ENCODE measurements at regions of chr6 and their contacts with region 1.

Region 1: GRCh38 chr6:32047850-32048766 is 9.9 kb downstream of the CYP21A2 start:
- H3K4me3 ChIP-seq: no peak overlapping the region
- H3K27ac ChIP-seq: no peak overlapping the region
- H3K4me1 ChIP-seq: no peaks in the 10 kb centered on the region
- CTCF ChIP-seq: peak; percentile 77

Region 2: DNA sequence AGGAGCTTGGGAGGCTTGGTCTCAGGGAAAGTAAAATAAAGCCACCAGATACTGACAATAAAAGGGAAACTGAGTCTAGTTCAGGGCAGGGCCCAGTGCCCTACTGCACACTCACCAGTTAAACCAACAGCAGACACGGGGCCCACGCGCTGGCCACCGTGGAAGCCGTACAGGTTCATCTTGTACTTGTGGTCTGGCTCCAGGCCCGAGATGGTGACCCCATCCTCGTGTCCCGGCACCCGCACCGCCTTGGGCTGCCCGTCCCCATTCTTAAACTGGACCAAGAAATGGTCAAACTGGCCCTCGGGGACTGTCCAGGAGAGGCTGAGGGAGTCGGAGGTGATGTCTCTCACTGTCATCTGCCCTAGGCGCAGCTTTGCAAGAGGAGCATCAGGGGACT is 16.6 kb after region 1 on chr6:
- CTCF ChIA-PET with region 1: interaction called, 20 read pairs
- POLR2A ChIA-PET with region 1: no interaction called
- H3K4me3 ChIP-seq: no peak overlapping the region
- H3K27ac ChIP-seq: no peak overlapping the region
- H3K4me1 ChIP-seq: no peaks in the 10 kb centered on the region
- CTCF ChIP-seq: no peak

Region 3: DNA sequence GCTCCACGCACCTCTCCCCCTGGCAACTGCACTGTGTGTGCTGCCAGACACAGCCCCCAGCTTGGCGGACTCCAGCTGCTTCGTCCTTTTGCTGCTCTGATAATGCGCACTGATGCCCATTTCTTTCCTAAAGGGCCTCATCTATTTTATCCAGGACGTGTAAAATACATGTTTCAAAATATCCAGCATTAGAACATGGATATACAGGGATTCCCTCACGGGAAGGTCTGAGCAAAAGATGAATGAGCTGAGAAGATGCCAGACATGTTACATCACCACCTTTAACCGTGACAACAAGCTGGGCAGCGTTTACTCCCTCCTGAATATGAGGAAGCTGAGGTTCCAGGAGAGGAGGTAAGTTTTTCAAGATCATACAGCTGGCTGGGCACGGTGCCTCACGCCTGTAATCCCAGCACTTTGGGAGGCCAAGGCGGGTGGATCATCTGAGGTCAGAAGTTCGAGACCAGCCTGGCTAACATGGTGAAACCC is 28.3 kb after region 1 on chr6:
- CTCF ChIA-PET with region 1: interaction called, 16 read pairs
- POLR2A ChIA-PET with region 1: no interaction called
- H3K4me3 ChIP-seq: no peak overlapping the region
- H3K27ac ChIP-seq: no peak overlapping the region
- H3K4me1 ChIP-seq: no peaks in the 10 kb centered on the region
- CTCF ChIP-seq: no peak

Region 4: DNA sequence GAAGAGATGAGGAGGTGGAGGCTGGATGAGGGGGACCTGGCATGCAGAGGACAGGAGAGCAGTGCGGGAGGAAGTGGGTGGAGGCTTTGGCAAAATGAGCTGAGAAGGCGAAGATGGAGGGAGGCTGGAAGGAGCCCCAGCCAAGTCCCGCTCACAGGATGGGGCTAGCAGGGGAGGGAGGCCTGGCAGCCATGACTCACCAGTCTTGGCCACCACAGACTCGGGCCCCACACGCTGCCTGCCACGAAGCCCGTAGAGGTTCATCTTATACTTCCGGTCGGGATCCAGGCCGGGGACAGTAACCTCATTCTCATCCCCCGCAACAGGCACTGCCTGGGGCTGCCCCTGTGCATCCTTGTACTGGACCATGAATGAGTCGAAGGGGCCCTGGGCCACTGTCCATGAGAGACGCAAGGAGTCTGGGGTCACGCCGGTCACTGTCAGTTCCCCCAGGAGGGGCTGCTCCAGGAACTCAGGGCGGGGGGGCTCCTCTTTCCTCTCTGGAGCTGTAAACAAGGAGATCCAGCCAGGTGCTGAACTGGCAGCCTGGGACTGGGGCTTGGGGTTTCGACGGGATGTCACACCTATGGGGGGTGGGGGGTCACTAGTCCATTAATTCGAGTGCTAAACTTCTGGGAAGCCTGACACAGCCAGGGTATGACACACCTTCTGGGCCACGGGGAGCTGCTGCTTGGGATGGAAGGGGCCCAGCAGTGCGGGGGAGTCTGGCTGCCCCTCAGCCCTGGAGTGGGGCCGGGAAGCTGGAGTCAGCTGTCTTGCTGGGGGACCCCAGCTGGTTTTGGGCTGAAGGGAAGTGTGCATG is 33.3 kb after region 1 on chr6:
- CTCF ChIA-PET with region 1: interaction called, 16 read pairs
- POLR2A ChIA-PET with region 1: no interaction called
- H3K4me3 ChIP-seq: no peak overlapping the region
- H3K27ac ChIP-seq: no peak overlapping the region
- H3K4me1 ChIP-seq: no peaks in the 10 kb centered on the region
- CTCF ChIP-seq: no peak

Region 5: DNA sequence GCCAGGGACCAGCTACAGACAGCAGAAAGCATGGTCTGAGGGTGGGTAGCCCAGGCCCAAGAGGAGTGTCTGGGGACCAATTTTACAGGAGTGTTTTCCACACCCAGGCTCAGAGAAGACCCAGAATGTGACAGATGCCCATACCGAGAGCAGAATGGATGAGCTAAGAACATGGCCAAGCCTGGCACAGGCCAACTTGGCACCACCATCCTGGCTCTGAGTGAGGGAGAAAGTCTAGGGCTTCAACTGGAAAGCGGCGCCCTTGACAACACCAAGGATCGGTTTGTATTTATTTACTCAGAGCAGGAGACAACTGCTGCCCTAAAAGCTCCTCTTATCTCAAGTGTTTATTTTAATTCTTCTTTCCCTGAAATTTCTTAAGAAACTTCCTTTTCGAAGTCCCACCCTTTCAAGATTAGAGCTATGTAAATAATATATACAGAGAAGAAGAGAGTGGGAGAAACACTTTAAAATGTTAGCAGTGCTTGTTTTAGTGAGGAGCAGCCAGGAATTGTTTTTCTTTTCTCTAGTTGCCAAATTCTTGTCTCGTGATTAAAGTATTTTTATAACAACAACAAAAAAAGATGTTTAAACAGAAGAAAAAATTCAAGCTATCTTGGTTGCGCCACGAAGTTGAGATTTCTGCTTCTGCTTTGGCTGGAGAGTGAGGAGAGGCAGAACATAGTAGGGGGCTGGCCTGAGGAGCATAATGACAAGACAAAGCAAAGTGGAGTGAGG is 44.8 kb after region 1 on chr6:
- CTCF ChIA-PET with region 1: interaction called, 16 read pairs
- POLR2A ChIA-PET with region 1: no interaction called
- H3K4me3 ChIP-seq: no peak overlapping the region
- H3K27ac ChIP-seq: no peak overlapping the region
- H3K4me1 ChIP-seq: peaks cover 11% of the 10 kb centered on the region
- CTCF ChIP-seq: no peak

Region 6: GRCh38 chr6:32102255-32102654 is 54.1 kb after region 1 on chr6:
- CTCF ChIA-PET with region 1: interaction called, 16 read pairs
- POLR2A ChIA-PET with region 1: no interaction called
- H3K4me3 ChIP-seq: no peak overlapping the region
- H3K27ac ChIP-seq: no peak overlapping the region
- H3K4me1 ChIP-seq: no peaks in the 10 kb centered on the region
- CTCF ChIP-seq: no peak

Region 7: GRCh38 chr6:32369675-32370074 is 321.6 kb after region 1 on chr6:
- CTCF ChIA-PET with region 1: no interaction called
- POLR2A ChIA-PET with region 1: no interaction called
- H3K4me3 ChIP-seq: no peak overlapping the region
- H3K27ac ChIP-seq: no peak overlapping the region
- H3K4me1 ChIP-seq: 0 out of 2 replicates have a peak, but pooled peaks cover 3% of the 10 kb centered on the region
- CTCF ChIP-seq: no peak

Measured in HEK293 (cell line).